ENCODE measurements at regions of chr10 and their contacts with region 1.

Region 1: DNA sequence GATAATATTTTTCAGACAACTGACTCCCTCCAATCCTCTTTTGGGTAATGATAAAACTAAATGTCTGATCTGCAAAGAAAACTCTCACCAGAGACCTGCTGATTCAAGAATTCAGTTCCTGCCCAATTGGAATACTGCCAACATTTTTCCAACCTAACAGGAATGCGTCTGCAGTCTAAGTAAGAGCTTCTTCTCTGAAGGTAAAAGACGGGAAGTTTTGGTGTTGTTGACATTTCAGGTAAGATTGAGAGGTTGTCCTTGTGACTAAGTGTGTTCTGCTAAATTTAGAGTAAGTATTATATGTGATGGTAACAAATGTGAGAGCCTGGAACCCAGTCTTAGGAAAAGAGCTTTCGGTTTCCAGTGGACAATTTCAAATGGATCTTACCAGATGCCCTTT is 17.6 kb downstream of the IFIT5 start:
- DNase-seq: no peak
- ATAC-seq: peak in 2 of 4 donors; percentile 24 to 28
- H3K4me3 ChIP-seq: peak overlapping the region in 3 of 12 donors; percentile 2 to 13 (median 7)
- H3K27ac ChIP-seq: peak overlapping the region in 5 of 12 donors; percentile 1 to 40 (median 19)
- H3K4me1 ChIP-seq: peaks cover 0 to 32% (median 9%) of the 10 kb centered on the region in 12 donors
- H3K27me3 ChIP-seq: no peaks in the 10 kb centered on the region
- CTCF ChIP-seq: no peak
- POLR2A ChIP-seq: no peak

Region 2: GRCh38 chr10:89314676-89315075 is 117.3 kb before region 1 on chr10:
- intact Hi-C with region 1: no loop called
- DNase-seq: no peak
- ATAC-seq: no peak
- H3K4me3 ChIP-seq: no peak overlapping the region
- H3K27ac ChIP-seq: no peak overlapping the region
- H3K4me1 ChIP-seq: peaks cover 0 to 3% (median 0%) of the 10 kb centered on the region in 12 donors
- H3K27me3 ChIP-seq: no peaks in the 10 kb centered on the region
- CTCF ChIP-seq: no peak
- POLR2A ChIP-seq: no peak

Region 3: DNA sequence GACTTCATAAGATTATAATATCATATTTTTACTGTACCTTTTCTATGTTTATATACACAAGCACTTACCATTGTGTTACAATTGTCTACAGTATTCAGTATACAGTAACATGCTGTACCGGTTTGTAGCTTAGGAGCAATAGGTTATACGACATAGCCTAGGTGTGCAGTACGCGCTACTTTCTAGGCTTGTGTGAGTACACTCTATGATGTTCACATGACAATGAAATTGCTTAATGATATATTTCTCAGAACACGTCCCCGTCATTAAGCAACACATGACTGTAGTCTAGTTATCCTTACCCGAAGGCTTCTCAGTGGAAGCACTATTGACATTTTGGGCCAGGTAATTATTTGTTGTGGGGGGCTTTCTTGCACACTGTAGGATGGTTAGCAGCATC is 21.5 kb after region 1 on chr10:
- intact Hi-C with region 1: loop called in 1 of 10 experiments (anchors 1 kb)
- DNase-seq: no peak
- ATAC-seq: no peak
- H3K4me3 ChIP-seq: no peak overlapping the region
- H3K27ac ChIP-seq: no peak overlapping the region
- H3K4me1 ChIP-seq: peaks cover 0 to 13% (median 7%) of the 10 kb centered on the region in 12 donors
- H3K27me3 ChIP-seq: no peaks in the 10 kb centered on the region
- CTCF ChIP-seq: no peak
- POLR2A ChIP-seq: no peak

Region 4: GRCh38 chr10:89466599-89467035 is 34.6 kb after region 1 on chr10:
- intact Hi-C with region 1: loop called in 2 of 10 experiments (anchors 5 kb)
- DNase-seq: no peak
- ATAC-seq: peak; percentile 29 to 74 (median 70)
- H3K4me3 ChIP-seq: no peak overlapping the region
- H3K27ac ChIP-seq: no peak overlapping the region
- H3K4me1 ChIP-seq: peaks cover 0 to 24% (median 0%) of the 10 kb centered on the region in 12 donors
- H3K27me3 ChIP-seq: no peaks in the 10 kb centered on the region
- CTCF ChIP-seq: peak in 10 of 12 donors; percentile 15 to 57 (median 34)
- POLR2A ChIP-seq: no peak

Region 5: DNA sequence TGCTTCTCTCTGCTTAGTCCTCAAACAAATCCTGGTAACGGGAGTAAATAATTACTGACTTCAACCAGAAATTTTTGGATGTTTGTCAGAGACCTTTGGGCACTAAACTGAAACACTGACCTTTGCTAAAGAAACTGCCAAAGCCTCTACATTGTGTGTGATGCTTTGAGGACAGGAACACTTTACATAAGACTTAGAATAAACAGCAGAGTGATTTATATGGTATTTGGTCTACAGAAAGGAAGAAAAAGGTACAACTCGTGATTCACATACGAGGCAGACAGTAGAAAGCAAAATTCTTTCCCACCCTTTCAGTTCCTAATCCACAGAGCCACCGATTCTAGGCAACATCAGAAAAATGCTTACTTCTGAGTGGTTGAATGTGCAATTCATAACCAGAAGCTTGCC is 43.6 kb after region 1 on chr10:
- intact Hi-C with region 1: loop called in 3 of 10 experiments (anchors 2 to 5 kb)
- DNase-seq: no peak
- ATAC-seq: no peak
- H3K4me3 ChIP-seq: no peak overlapping the region
- H3K27ac ChIP-seq: peak overlapping the region; percentile 33 to 88 (median 78)
- H3K4me1 ChIP-seq: peaks cover 0 to 78% (median 51%) of the 10 kb centered on the region in 12 donors
- H3K27me3 ChIP-seq: no peaks in the 10 kb centered on the region
- CTCF ChIP-seq: no peak
- POLR2A ChIP-seq: no peak